ENCODE measurements at regions of chr10 and their contacts with region 1.

Region 1: DNA sequence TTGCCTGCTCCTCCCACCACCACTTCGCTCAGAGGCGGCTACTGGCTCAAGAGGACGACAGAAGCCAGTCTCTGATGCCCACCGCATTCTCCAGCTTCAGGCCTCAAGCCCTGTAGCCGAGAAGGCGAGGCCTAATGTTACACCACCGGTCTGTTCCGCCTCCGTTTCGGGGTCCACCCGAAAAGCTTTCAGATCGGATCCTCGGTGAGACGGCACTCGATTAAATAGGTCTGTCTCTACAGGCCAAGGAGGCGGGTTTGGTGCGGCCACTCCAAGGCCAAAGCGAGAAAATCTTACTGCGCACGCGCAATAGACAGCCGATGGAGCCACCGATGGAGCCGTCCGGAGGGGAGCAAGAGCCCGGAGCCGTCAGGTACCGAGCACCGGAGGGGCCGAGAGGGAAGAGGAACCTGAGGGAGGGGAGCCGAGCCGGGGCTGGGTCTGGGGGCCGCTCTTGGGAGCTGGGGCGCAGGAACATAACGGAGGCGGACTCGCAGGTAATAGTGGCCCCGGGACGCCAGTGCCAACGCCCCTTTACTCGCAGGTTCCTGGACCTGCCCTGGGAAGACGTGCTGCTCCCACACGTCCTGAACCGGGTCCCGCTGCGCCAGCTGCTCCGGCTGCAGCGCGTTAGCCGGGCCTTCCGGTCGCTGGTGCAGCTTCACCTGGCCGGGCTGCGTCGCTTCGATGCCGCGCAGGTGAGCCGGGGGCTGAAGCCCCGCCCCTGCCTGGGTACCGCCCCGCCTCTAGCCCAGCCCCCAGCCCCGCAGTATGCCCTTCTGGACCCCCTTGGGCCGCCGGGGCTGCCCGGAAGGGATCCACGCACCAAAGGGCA is at the start of gene FBXL15:
- DNase-seq: peak; percentile 82 to 96 (median 90)
- ATAC-seq: peak; percentile 86
- H3K4me3 ChIP-seq: peak within 1 kb of the TSS; percentile 93
- H3K4me3 Mint-ChIP-seq: peak within 1 kb of the TSS; percentile 94 to 99 (median 98)
- H3K27ac ChIP-seq: peak within 1 kb of the TSS; percentile 75
- H3K27ac Mint-ChIP-seq: peak within 1 kb of the TSS; percentile 91 to 97 (median 95)
- H3K4me1 ChIP-seq: peaks cover 26 to 33% of the 10 kb centered on the region in 2 donors
- H3K4me1 Mint-ChIP-seq: peaks cover 17 to 46% (median 38%) of the 10 kb centered on the region in 7 donors
- H3K27me3 ChIP-seq: no peaks in the 10 kb centered on the region
- H3K27me3 Mint-ChIP-seq: peaks cover 17 to 26% (median 19%) of the 10 kb centered on the region in 5 donors
- total RNA-seq, gene FBXL15: 10.8 to 21.0 (median 14.1) TPM

Region 2: DNA sequence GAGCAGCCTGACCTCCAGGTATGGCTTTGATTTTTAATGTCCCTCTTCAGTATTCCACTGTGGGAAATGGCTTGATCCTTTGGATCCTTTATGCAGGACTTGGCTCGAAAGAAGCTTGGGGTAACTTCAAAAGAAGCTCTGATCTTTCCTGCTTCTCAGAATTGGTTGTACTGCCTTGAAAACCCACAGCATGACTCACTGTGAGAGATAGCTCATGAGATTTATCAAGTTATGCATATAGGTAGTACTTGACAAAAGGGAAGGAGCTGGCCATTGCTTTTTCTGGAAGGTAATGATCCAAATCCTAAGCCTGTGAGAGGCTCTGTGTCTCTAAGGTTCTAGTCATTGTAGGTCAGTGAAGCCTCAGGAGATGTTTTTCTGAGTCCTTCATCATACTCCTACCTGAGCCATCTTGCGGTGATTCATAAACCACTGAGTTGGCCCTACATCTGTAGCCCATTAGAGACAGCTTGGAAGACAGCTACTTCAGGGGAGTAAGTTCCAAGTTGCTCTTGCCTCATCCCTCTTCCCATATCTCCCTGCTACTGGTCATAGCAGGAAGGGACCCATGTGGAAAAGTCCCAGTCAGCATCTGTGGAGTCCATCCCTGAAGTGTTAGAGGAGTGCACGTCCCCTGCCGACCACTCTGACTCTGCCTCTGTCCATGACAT is 62.2 kb before region 1 on chr10:
- CTCF ChIA-PET with region 1: no interaction called
- POLR2A ChIA-PET with region 1: no interaction called
- intact Hi-C with region 1: loop called in 1 of 2 experiments (anchors 2 kb)
- DNase-seq: no peak
- ATAC-seq: no peak
- H3K4me3 ChIP-seq: no peak overlapping the region
- H3K4me3 Mint-ChIP-seq: no peak overlapping the region
- H3K27ac ChIP-seq: no peak overlapping the region
- H3K27ac Mint-ChIP-seq: no peak overlapping the region
- H3K4me1 ChIP-seq: no peaks in the 10 kb centered on the region
- H3K4me1 Mint-ChIP-seq: peaks cover 0 to 18% (median 0%) of the 10 kb centered on the region in 7 donors
- H3K27me3 ChIP-seq: no peaks in the 10 kb centered on the region
- H3K27me3 Mint-ChIP-seq: no peaks in the 10 kb centered on the region

Region 3: DNA sequence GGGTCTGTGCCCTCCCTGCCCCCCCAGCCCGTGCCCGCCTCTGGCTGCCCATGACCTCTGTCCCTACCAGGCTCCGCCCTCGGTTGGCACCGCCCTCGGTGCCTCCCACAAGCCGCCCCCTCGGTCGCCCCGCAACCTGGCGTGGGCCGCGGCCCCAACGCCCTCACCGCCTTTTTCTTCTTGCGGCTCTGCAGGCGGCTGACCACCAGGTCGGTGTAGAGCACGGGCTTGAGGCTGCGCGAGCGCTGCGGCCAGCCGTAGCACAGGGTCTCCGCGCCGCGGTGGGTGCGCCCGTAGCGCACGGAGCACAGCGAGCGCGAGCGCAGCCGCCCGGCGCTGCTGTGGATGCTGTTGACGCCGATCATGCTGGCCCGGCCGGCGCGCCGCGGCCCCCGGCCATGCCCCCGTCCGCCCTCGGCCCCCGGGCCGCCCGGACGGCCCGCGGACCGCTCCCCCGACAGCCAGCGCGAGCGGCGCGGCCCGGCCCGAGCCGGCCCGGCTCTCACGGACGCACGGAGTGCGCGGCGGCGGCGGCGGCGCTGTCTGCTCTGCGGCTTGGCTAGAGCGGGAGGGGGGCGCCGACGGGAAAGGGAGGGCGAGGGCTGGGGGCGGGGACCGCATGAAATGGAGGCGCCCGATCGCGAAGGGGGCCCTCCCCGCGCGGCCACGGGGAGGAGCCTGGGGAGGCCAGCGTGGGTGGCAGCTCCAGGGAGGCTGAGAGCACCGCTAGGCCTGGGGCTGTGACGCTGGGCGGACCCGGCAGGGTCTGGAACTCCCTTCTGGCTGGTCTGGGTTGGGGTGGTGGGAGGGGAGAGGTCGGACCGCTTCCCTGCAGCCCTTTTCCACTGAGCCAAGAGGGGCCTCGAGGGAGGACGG is 12.1 kb before region 1 on chr10:
- CTCF ChIA-PET with region 1: interaction called, 6 read pairs
- POLR2A ChIA-PET with region 1: interaction called, 53 read pairs
- intact Hi-C with region 1: loop called (anchors 1 kb)
- DNase-seq: peak; percentile 53 to 88 (median 76)
- ATAC-seq: peak; percentile 79
- H3K4me3 ChIP-seq: peak overlapping the region; percentile 66
- H3K4me3 Mint-ChIP-seq: peak overlapping the region; percentile 73 to 91 (median 87)
- H3K27ac ChIP-seq: peak overlapping the region; percentile 72
- H3K27ac Mint-ChIP-seq: peak overlapping the region; percentile 42 to 92 (median 87)
- H3K4me1 ChIP-seq: peaks cover 5 to 36% of the 10 kb centered on the region in 2 donors
- H3K4me1 Mint-ChIP-seq: peaks cover 22 to 50% (median 42%) of the 10 kb centered on the region in 7 donors
- H3K27me3 ChIP-seq: peaks cover 0 to 12% of the 10 kb centered on the region in 2 donors
- H3K27me3 Mint-ChIP-seq: peaks cover 0 to 32% (median 18%) of the 10 kb centered on the region in 5 donors

Region 4: DNA sequence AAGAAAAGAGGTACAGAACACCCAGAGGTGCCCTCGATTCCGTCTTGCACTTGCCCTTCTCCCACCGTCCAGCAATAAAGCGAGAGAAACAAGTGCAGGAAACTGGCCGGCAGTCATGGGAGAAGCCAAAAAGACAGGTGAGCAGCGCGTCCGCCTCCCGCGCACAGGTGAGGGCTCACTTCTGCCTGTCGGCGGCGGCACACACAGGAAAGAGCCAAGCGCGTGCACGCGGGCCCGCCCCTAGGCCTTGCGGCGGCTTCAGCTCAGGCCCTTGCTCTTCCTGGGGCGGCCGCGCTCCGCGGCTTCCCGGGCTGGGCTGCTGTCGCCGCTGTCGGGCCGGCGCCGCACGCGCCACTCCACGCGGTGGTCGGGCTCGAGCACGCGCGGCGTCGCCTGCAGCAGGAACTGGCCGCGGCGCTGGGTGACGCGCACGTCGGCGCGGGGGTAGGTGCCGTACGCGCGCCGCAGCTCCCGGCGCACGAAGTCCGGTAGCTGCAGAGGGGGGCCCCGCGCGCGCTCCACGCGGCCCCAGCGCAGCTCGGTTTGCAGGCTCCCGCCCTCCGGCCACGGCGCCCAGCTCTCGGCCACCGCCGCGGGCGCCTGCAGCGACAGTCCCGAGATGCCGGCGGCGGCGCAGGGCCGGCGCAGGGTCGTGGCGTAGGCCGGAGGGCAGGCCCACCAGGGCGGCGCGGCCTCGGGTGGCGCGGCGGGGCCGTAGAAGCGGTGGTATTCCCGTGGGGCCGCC is 29.3 kb after region 1 on chr10:
- CTCF ChIA-PET with region 1: interaction called, 5 read pairs
- POLR2A ChIA-PET with region 1: interaction called, 73 read pairs
- intact Hi-C with region 1: loop called (anchors 1 kb)
- DNase-seq: peak; percentile 85 to 95 (median 92)
- ATAC-seq: peak; percentile 90
- H3K4me3 ChIP-seq: peak overlapping the region; percentile 88
- H3K4me3 Mint-ChIP-seq: peak overlapping the region; percentile 89 to 97 (median 94)
- H3K27ac ChIP-seq: peak overlapping the region; percentile 90
- H3K27ac Mint-ChIP-seq: peak overlapping the region; percentile 81 to 97 (median 95)
- H3K4me1 ChIP-seq: peaks cover 12 to 14% of the 10 kb centered on the region in 2 donors
- H3K4me1 Mint-ChIP-seq: peaks cover 14 to 37% (median 27%) of the 10 kb centered on the region in 7 donors
- H3K27me3 ChIP-seq: no peaks in the 10 kb centered on the region
- H3K27me3 Mint-ChIP-seq: no peaks in the 10 kb centered on the region

Region 5: GRCh38 chr10:102473445-102474331 is 52.7 kb after region 1 on chr10:
- CTCF ChIA-PET with region 1: interaction called, 3 read pairs
- POLR2A ChIA-PET with region 1: interaction called, 10 read pairs
- intact Hi-C with region 1: no loop called
- DNase-seq: peak in 5 of 9 donors; percentile 32 to 45 (median 34)
- ATAC-seq: peak; percentile 64
- H3K4me3 ChIP-seq: no peak overlapping the region
- H3K4me3 Mint-ChIP-seq: peak overlapping the region; percentile 18 to 74 (median 60)
- H3K27ac ChIP-seq: peak overlapping the region; percentile 59
- H3K27ac Mint-ChIP-seq: peak overlapping the region; percentile 71 to 96 (median 86)
- H3K4me1 ChIP-seq: peaks cover 9 to 12% of the 10 kb centered on the region in 2 donors
- H3K4me1 Mint-ChIP-seq: peaks cover 13 to 47% (median 32%) of the 10 kb centered on the region in 7 donors
- H3K27me3 ChIP-seq: no peaks in the 10 kb centered on the region
- H3K27me3 Mint-ChIP-seq: no peaks in the 10 kb centered on the region